GM12878 (cell line): ENCODE measurements at regions of chr3 and their contacts with region 1.

Region 1: GRCh38 chr3:28122227-28122626 is 119.2 kb upstream of the CMC1 start:
- DNase-seq: no peak
- ATAC-seq: no peak
- H3K4me3 ChIP-seq: no peak overlapping the region
- H3K27ac ChIP-seq: no peak overlapping the region
- H3K4me1 ChIP-seq: no peaks in the 10 kb centered on the region
- H3K27me3 ChIP-seq: no peaks in the 10 kb centered on the region
- CTCF ChIP-seq: no peak
- EP300 ChIP-seq: no peak
- POLR2A ChIP-seq: no peak
- RAD21 ChIP-seq: no peak

Region 2: DNA sequence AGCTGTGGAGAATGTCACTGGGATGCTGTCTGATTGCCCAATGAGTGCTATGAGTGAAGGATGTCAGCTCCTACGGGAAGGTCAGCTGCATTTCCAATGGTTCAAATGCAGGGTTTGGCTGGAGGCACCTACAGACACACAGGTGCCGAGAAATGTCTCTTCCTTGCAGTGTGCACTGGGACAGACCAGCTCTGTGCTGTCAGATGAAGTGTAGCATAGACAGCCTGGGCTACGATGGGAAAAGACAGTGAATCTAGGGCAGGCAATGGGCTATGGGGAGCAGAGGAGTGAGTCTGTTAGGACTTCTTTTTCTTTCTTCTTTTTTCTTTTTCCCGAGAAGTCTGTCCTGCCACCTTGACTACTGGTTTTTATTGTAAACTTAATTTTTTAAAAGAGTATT is 177.0 kb before region 1 on chr3:
- CTCF ChIA-PET with region 1: no interaction called
- POLR2A ChIA-PET with region 1: no interaction called
- RAD21 ChIA-PET with region 1: no interaction called
- SMC1A ChIA-PET with region 1: no interaction called
- in situ Hi-C with region 1: no loop called
- intact Hi-C with region 1: no loop called
- DNase-seq: no peak
- ATAC-seq: peak; percentile 52
- H3K4me3 ChIP-seq: no peak overlapping the region
- H3K27ac ChIP-seq: no peak overlapping the region
- H3K4me1 ChIP-seq: no peaks in the 10 kb centered on the region
- H3K27me3 ChIP-seq: no peaks in the 10 kb centered on the region
- CTCF ChIP-seq: no peak
- EP300 ChIP-seq: no peak
- POLR2A ChIP-seq: no peak
- RAD21 ChIP-seq: no peak

Region 3: DNA sequence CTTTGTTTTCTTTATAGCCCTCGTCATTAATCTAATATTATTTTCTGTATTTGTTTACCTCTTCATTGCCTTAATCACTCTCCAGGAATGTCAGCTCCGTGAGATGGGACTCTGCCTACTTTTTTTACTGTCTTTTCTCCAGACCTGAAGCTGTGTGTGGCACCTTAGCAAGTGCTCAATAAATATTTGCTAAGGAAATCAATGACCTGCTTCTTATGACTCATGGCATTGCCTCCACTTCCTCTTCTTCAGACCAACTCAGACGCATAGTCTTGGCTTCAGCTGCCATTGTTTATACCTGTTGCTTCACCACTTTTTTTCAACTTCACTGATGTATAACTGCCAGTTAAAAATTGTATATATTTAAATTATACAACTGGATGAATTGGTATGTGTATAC is 99.3 kb before region 1 on chr3:
- CTCF ChIA-PET with region 1: no interaction called
- POLR2A ChIA-PET with region 1: no interaction called
- RAD21 ChIA-PET with region 1: interaction called, 248 read pairs
- SMC1A ChIA-PET with region 1: interaction called, 23 read pairs
- in situ Hi-C with region 1: no loop called
- intact Hi-C with region 1: no loop called
- DNase-seq: no peak
- ATAC-seq: 0 out of 3 replicates have a peak, but pooled peaks have one; percentile 8
- H3K4me3 ChIP-seq: no peak overlapping the region
- H3K27ac ChIP-seq: no peak overlapping the region
- H3K4me1 ChIP-seq: no peaks in the 10 kb centered on the region; the same call in 1 of the 2 replicates
- H3K27me3 ChIP-seq: no peaks in the 10 kb centered on the region
- CTCF ChIP-seq: no peak
- EP300 ChIP-seq: no peak
- POLR2A ChIP-seq: no peak
- RAD21 ChIP-seq: no peak